ENCODE measurements at regions of chr12 and their contacts with region 1.

Region 1: GRCh38 chr12:21642707-21643389 is 14.8 kb downstream of the LDHB start:
- DNase-seq: no peak
- H3K4me3 Mint-ChIP-seq: no peak overlapping the region
- H3K27ac Mint-ChIP-seq: no peak overlapping the region
- H3K4me1 Mint-ChIP-seq: peaks cover 83% of the 10 kb centered on the region
- H3K27me3 Mint-ChIP-seq: no peaks in the 10 kb centered on the region
- CTCF ChIP-seq: no peak

Region 2: GRCh38 chr12:21618566-21618965 is 24.3 kb before region 1 on chr12:
- CTCF ChIA-PET with region 1: no interaction called
- intact Hi-C with region 1: no loop called
- DNase-seq: no peak
- H3K4me3 Mint-ChIP-seq: no peak overlapping the region
- H3K27ac Mint-ChIP-seq: no peak overlapping the region
- H3K4me1 Mint-ChIP-seq: peaks cover 9% of the 10 kb centered on the region
- H3K27me3 Mint-ChIP-seq: no peaks in the 10 kb centered on the region
- CTCF ChIP-seq: no peak

Region 3: DNA sequence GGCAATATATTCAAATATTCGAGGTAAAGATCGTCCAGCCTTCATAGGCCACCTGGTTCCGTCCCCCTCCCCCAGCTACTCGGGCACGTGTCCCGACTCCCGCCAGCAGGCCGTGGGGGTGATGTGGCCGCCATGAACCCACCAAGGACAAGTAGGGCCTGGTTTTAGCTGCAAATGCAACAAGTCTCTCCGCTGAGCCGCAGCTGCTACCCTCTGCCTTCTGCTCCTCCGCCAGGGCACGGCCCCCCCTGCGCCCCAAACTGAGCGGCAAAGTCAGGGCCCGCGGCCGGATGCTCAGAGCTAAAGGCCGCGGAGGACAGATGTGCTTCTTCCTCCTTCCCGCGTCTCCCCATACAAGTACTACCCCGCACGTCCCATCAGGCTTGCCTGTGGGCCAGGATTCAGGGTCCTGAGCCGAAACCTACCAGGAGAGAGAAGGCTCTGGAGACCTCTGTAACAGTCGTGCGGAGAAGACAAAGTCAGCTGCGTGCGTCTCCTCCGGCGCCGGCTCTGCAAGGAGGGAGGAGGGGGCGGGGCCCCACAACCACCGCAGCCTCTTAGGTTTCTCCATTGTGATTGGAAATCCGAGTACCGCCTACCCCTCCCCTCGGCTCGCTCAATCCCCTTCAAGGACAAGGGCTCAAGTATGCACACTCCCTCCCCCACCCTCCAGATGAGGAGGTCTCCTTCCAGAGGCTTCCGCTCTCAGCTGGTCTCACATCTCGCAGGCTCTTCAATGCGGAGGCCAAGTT is 14.7 kb after region 1 on chr12 and contains the start of gene LDHB:
- CTCF ChIA-PET with region 1: interaction called, 3 read pairs
- intact Hi-C with region 1: loop called (anchors 2 kb)
- DNase-seq: peak; percentile 94
- H3K4me3 Mint-ChIP-seq: peak within 1 kb of the TSS; percentile 85
- H3K27ac Mint-ChIP-seq: peak within 1 kb of the TSS; percentile 76
- H3K4me1 Mint-ChIP-seq: peaks cover 31% of the 10 kb centered on the region
- H3K27me3 Mint-ChIP-seq: no peaks in the 10 kb centered on the region
- CTCF ChIP-seq: no peak
- total RNA-seq, gene LDHB: 816 and 826 TPM in 2 replicates

Region 4: DNA sequence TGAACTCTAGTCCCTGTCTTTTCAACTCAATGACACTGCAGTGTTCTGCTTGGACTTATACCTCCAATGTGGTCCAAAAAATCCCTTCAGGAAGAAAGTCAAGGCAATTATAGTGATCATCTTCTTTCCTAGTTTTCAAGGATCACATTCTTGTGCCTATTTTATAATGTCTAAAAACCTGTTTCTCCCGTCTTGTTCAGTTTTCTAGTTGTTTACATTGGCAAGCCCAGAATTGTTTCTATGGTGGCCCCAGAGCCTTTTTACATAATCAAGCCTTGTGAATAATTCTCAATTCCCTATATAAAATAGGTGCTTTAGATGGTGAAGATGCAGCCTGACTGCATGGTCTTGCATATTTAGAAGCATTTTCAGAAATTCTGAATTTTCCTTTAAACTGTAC is 29.3 kb after region 1 on chr12:
- CTCF ChIA-PET with region 1: interaction called, 3 read pairs
- intact Hi-C with region 1: loop called (anchors 5 kb)
- DNase-seq: no peak
- H3K4me3 Mint-ChIP-seq: no peak overlapping the region
- H3K27ac Mint-ChIP-seq: no peak overlapping the region
- H3K4me1 Mint-ChIP-seq: peaks cover 14% of the 10 kb centered on the region
- H3K27me3 Mint-ChIP-seq: peaks cover 9% of the 10 kb centered on the region
- CTCF ChIP-seq: no peak

Region 5: DNA sequence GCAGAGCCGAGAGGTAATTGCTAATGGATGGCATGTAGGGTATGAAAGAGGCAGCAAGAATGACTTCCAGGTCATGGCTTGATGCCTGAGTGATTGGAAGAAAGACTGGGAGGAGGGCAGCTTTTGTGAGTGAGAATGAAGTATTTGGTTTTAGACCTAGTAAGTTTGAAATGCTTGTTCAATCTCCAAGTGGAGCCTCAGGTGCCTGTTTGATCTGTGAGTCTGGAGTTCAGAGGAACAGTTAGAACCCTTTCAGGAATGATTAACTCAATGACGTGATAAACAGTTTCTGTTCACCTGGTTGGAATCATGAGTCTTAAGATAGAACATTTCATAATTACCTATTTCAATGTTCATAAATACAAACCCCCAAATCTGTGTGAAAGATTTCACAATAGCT is 121.2 kb after region 1 on chr12:
- CTCF ChIA-PET with region 1: no interaction called
- intact Hi-C with region 1: no loop called
- DNase-seq: no peak
- H3K4me3 Mint-ChIP-seq: no peak overlapping the region
- H3K27ac Mint-ChIP-seq: no peak overlapping the region
- H3K4me1 Mint-ChIP-seq: peaks cover 8% of the 10 kb centered on the region
- H3K27me3 Mint-ChIP-seq: no peaks in the 10 kb centered on the region
- CTCF ChIP-seq: no peak

Region 6: GRCh38 chr12:21940549-21941505 is 298.0 kb after region 1 on chr12 and contains the start of gene ABCC9:
- CTCF ChIA-PET with region 1: no interaction called
- intact Hi-C with region 1: no loop called
- DNase-seq: no peak
- H3K4me3 Mint-ChIP-seq: no peak within 1 kb of the TSS
- H3K27ac Mint-ChIP-seq: no peak within 1 kb of the TSS
- H3K4me1 Mint-ChIP-seq: no peaks in the 10 kb centered on the region
- H3K27me3 Mint-ChIP-seq: no peaks in the 10 kb centered on the region
- CTCF ChIP-seq: no peak
- total RNA-seq, gene ABCC9: 0.05 TPM in 1 of 2 replicates, not detected in the other

Measured in Calu3 (cell line).